Esophagus muscularis mucosa (tissue), 4 donors: ENCODE measurements at regions of chr12 and their contacts with region 1.

Region 1: DNA sequence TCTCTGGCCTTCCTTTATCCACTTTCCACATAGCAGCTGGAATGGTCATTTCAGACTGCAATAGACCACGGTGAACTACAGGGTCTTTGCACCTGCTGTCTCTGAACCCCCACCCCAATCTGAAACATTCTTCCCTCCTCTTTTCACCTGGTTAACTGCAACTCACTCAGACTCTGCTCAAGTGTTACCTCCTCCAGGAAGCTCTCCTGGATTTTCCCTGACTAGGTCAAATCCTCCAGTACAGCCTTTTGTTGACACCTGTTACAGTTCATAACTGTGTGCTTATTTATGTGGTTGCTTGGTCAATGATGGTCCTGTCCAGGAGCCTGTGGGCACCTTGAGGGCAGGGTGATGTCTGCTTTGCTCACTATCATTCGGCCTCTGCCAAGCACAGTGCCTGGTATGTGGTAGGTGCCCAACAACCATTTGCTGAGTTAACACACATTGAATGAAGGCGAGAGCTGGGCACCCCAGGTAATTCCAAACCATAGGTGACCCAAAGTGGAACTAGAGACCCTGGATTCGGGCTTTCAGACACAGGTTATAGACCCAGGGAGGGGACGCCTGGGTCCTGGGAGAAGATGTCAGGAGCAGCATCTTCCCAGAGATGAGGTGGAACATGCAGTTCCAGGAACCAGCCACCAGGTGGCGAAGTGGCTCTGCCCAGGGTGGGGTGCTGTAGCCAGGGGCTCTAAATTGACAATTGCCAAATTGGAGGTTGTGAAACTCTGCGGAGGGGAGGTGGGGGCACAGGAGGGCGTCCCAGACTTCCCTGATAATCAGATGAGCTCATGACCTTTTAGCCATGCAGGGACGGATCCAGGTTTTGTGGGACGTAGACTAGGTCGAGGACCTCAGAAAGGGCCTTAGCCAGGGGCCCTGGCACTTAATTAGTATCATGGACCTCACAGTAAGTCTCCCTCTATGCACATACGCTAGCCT is 28.1 kb downstream of the TRPV4 start:
- DNase-seq: no peak
- H3K4me3 ChIP-seq: no peak overlapping the region
- H3K27ac ChIP-seq: no peak overlapping the region
- H3K4me1 ChIP-seq: peaks cover 0 to 4% (median 0%) of the 10 kb centered on the region in 4 donors
- H3K27me3 ChIP-seq: peaks cover 0 to 4% (median 0%) of the 10 kb centered on the region in 4 donors
- CTCF ChIP-seq: peak; percentile 93 to 98 (median 98)
- EP300 ChIP-seq: no peak
- POLR2A ChIP-seq: no peak

Region 2: GRCh38 chr12:109760011-109760954 is 44.8 kb before region 1 on chr12:
- intact Hi-C with region 1: no loop called
- DNase-seq: no peak
- H3K4me3 ChIP-seq: no peak overlapping the region
- H3K27ac ChIP-seq: no peak overlapping the region
- H3K4me1 ChIP-seq: peaks cover 0 to 8% (median 0%) of the 10 kb centered on the region in 4 donors
- H3K27me3 ChIP-seq: peaks cover 0 to 8% (median 0%) of the 10 kb centered on the region in 4 donors
- CTCF ChIP-seq: no peak
- EP300 ChIP-seq: no peak
- POLR2A ChIP-seq: no peak

Region 3: GRCh38 chr12:109844983-109845823 is 40.1 kb after region 1 on chr12:
- intact Hi-C with region 1: loop called (anchors 1 kb)
- DNase-seq: no peak
- H3K4me3 ChIP-seq: peak overlapping the region; percentile 24 to 50 (median 32)
- H3K27ac ChIP-seq: no peak overlapping the region
- H3K4me1 ChIP-seq: peaks cover 0 to 9% (median 8%) of the 10 kb centered on the region in 4 donors
- H3K27me3 ChIP-seq: no peaks in the 10 kb centered on the region
- CTCF ChIP-seq: peak in 2 of 3 experiments; percentile 96 to 97
- EP300 ChIP-seq: no peak
- POLR2A ChIP-seq: no peak

Region 4: DNA sequence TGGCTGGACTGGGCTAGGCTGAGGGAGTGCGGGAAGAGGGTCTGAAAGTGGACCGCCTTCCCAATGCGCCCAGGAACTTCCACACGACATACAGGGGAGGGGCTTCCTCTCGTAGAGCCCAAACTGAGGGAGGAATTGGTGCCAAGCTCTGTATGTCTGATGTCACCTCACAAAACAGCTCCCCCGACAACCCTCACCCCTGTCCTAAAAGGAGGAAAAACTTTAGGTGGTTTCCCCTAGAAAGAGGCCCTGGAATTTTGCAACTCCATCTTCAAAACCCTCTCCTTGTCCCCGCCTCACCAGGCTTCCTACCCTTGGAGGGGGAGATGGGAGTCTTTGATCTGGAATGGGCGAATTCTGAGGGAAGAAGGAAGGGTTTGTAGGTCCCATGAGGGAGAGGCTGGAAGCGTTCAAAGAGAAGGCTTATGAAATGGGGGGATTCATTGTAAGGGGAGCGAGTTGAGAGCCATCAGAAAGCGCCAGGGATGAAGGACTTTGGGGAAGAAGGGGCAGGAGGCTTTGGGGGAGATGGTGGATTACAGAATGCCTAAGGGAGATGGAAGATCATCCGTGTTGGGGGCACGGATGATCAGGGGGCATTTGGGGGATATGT is 74.4 kb after region 1 on chr12:
- intact Hi-C with region 1: loop called (anchors 1 kb)
- DNase-seq: no peak
- H3K4me3 ChIP-seq: peak overlapping the region; percentile 83 to 92 (median 86)
- H3K27ac ChIP-seq: peak overlapping the region; percentile 76 to 84 (median 83)
- H3K4me1 ChIP-seq: peaks cover 24 to 43% (median 32%) of the 10 kb centered on the region in 4 donors
- H3K27me3 ChIP-seq: no peaks in the 10 kb centered on the region
- CTCF ChIP-seq: no peak
- EP300 ChIP-seq: no peak
- POLR2A ChIP-seq: no peak